SK-N-SH (cell line): ENCODE measurements at regions of chr3 and their contacts with region 1.

Region 1: GRCh38 chr3:196684548-196685407 is 27.3 kb downstream of the CEP19 start:
- DNase-seq: peak; percentile 71
- H3K4me3 ChIP-seq: no peak overlapping the region; a peak in 2 of 4 replicates
- H3K27ac ChIP-seq: no peak overlapping the region
- H3K4me1 ChIP-seq: peaks cover 0 to 6% of the 10 kb centered on the region in 2 experiments; a peak in 2 of 4 replicates
- H3K27me3 ChIP-seq: no peaks in the 10 kb centered on the region
- CTCF ChIP-seq: peak; percentile 85
- EP300 ChIP-seq: no peak
- RAD21 ChIP-seq: peak; percentile 83

Region 2: GRCh38 chr3:196251918-196252317 is 432.9 kb before region 1 on chr3:
- CTCF ChIA-PET with region 1: interaction called, 10 read pairs
- POLR2A ChIA-PET with region 1: no interaction called
- DNase-seq: no peak
- H3K4me3 ChIP-seq: no peak overlapping the region
- H3K27ac ChIP-seq: no peak overlapping the region
- H3K4me1 ChIP-seq: no peaks in the 10 kb centered on the region
- H3K27me3 ChIP-seq: no peaks in the 10 kb centered on the region
- CTCF ChIP-seq: no peak
- EP300 ChIP-seq: no peak
- RAD21 ChIP-seq: no peak

Region 3: GRCh38 chr3:196585044-196585757 is 99.6 kb before region 1 on chr3:
- CTCF ChIA-PET with region 1: interaction called, 11 read pairs
- POLR2A ChIA-PET with region 1: no interaction called
- DNase-seq: no peak
- H3K4me3 ChIP-seq: no peak overlapping the region
- H3K27ac ChIP-seq: peak overlapping the region in 1 of 2 experiments; percentile 79; a peak in 1 of 4 replicates
- H3K4me1 ChIP-seq: peaks cover 0 to 10% of the 10 kb centered on the region in 2 experiments; a peak in 1 of 4 replicates
- H3K27me3 ChIP-seq: no peaks in the 10 kb centered on the region
- CTCF ChIP-seq: no peak
- EP300 ChIP-seq: no peak
- RAD21 ChIP-seq: no peak

Region 4: DNA sequence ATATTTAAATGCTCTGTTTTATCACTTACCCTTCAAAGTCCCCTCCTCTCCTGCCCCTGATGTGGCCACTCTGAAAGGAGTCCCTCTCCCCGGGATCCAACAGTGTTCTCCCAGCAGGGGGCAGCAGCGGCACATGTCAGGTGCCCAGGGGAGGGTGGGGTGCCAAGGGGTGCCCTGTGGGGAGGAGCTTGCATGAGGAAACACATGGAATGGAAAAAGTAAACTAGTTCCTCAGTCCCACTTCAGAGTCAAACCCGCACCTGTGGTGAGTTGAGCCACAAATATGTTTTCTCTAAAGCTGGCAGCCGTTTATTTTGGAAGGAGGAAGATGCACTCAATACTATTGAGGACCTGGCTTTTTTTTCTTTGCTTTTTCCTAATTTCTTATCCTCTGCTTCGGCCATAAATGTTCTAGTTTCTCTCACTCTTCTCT is 75.4 kb before region 1 on chr3:
- CTCF ChIA-PET with region 1: interaction called, 54 read pairs
- POLR2A ChIA-PET with region 1: no interaction called
- DNase-seq: peak; percentile 92
- H3K4me3 ChIP-seq: no peak overlapping the region; a peak in 1 of 4 replicates
- H3K27ac ChIP-seq: no peak overlapping the region
- H3K4me1 ChIP-seq: peaks cover 7 to 9% of the 10 kb centered on the region in 2 experiments; a peak in 2 of 4 replicates
- H3K27me3 ChIP-seq: no peaks in the 10 kb centered on the region
- CTCF ChIP-seq: peak; percentile 85
- EP300 ChIP-seq: no peak
- RAD21 ChIP-seq: peak; percentile 90

Region 5: DNA sequence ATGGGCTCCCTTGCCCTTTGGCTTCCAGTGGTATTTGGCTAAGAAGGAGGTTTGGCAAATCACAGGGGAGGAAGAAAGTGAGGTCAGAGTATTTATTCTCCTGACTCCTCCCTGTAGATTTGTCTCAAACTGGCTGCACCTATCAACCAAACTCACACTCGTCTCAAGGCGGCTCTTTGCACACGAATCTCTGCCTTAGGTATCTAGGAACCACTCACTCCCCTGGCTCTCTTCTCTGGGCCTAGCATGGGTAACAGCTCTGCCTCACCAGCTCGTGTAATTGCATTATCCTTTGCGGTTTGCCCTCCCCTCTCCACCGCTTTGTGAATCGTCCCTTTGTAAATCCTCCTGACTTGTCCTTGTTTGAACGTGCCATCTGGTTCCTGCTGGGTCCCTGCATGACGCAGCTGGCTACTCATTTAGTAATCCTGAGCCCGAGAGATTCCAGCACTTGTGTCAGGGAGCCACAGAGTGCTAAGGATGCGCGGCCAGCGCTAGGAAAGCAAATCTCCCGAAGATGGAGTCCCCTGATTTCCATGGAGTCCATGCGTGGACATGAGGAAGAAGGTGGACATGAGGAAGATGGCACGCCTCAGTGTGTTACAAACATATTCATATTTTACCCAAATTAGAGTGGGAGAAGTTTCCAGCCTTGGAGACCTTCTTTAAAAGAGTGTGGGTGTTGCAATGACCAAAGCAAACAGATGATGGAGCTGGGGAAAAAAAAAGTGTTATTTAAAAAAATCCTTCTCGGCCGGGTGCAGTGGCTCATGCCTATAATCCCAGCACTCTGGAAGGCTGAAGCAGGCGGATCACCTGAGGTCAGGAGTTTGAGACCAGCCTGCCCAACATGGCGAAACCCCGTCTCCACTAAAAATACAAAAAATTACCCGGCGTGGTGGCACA is 18.6 kb before region 1 on chr3:
- CTCF ChIA-PET with region 1: interaction called, 15 read pairs
- POLR2A ChIA-PET with region 1: no interaction called
- DNase-seq: no peak
- H3K4me3 ChIP-seq: no peak overlapping the region
- H3K27ac ChIP-seq: peak overlapping the region in 1 of 2 experiments; percentile 23; a peak in 1 of 4 replicates
- H3K4me1 ChIP-seq: peaks cover 5 to 8% of the 10 kb centered on the region in 2 experiments; a peak in 2 of 4 replicates
- H3K27me3 ChIP-seq: no peaks in the 10 kb centered on the region; the same call in 1 of the 2 replicates
- CTCF ChIP-seq: no peak
- EP300 ChIP-seq: no peak
- RAD21 ChIP-seq: no peak

Region 6: DNA sequence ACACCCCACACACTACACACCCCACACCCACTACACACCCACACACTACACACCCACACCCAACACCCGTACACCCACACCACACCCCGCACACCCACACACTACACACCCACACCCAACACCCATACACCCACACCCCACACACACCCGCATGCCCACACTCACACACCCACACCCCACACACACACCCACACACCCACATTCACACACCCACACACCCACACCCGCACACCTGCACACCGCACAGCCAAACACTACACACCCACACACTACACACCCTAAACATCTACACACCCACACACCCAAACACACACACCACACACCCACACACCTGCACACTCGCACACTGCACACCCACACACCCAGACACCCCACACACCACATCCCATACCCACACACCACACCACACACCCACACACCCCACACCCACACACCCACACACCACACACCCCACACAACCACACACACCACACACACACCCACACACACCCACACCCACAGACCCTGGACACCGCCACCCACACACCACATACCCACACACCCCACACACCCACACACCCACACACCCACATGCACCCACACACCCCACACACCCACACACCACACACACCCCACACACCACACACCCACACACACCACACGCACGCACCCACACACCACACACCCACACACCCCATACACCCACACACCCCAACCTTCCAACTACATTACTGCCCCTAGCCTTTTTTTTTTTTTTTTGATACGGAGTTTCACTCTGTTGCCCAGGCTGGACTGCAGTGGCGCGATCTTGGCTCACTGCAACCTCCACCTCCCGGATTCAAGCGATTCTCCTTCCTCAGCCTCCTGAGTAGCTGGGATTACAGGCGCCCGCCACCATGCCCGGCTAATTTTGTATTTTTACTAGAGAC is 10.4 kb after region 1 on chr3:
- CTCF ChIA-PET with region 1: interaction called, 15 read pairs
- POLR2A ChIA-PET with region 1: no interaction called
- DNase-seq: no peak
- H3K4me3 ChIP-seq: no peak overlapping the region
- H3K27ac ChIP-seq: no peak overlapping the region
- H3K4me1 ChIP-seq: no peaks in the 10 kb centered on the region
- H3K27me3 ChIP-seq: no peaks in the 10 kb centered on the region
- CTCF ChIP-seq: no peak
- EP300 ChIP-seq: no peak
- RAD21 ChIP-seq: no peak

Region 7: DNA sequence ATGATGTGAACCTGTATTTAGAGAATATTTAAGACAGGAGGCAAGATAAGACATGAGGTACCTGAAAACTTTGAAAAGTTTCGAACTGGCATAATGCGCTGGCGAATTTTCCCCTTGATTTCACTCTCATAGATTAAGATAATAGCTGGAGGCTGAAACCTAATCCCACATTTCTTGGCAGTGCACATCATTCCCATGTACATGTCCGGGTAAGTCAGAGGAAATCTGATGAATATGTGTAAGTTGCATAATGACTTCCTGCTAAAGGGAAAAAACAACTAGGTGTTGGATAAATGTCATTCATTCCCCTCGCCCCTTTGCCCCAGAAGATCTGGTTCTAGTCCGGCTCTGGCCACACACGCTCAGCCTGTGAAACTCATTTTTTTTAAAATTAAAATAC is 23.7 kb after region 1 on chr3:
- CTCF ChIA-PET with region 1: interaction called, 11 read pairs
- POLR2A ChIA-PET with region 1: no interaction called
- DNase-seq: no peak
- H3K4me3 ChIP-seq: no peak overlapping the region
- H3K27ac ChIP-seq: no peak overlapping the region
- H3K4me1 ChIP-seq: peaks cover 0 to 3% of the 10 kb centered on the region in 2 experiments; a peak in 1 of 4 replicates
- H3K27me3 ChIP-seq: no peaks in the 10 kb centered on the region
- CTCF ChIP-seq: no peak
- EP300 ChIP-seq: no peak
- RAD21 ChIP-seq: no peak

Region 8: DNA sequence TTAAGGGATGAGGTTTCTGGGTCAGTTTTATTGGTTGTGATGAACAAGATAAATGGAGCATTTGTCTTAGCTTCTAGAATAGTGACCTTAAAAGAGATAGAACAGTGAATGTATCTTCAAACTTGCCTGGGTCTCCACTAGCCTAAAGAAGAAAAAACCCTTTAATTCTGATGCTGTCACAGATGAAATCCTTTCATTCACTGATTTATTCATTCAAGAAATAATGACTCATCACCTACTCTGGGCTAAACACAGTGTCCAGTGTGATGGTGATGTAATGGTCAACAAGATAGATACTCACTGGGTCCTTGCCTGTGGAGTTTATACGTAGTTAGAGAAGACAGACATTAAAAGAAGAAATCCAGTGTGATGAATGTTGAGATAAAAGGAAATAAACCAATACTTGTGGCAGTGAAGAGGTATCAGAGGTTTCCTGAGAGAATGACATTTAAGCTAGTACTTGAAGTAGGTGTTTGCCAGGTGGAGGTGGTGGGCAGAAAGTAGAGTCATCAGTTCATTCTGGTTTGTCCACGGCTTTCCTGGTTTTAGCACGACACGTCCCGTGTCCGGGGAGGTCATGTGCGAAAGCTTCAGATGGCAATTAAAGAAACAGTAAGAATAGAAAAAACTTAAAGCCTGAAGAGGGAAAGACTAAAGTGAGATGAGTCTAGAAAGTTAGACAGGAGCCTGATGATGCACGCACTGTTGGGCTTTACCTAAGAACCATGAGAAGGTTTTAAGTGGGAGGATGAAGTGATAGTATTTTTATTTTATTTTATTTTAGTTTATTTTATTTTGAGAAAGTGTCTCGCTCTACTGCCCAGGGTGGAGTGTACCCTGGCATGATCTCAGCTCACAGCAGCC is 73.3 kb after region 1 on chr3:
- CTCF ChIA-PET with region 1: no interaction called
- POLR2A ChIA-PET with region 1: no interaction called
- DNase-seq: no peak
- H3K4me3 ChIP-seq: no peak overlapping the region
- H3K27ac ChIP-seq: peak overlapping the region in 1 of 2 experiments; percentile 58; a peak in 1 of 4 replicates
- H3K4me1 ChIP-seq: peaks cover 0 to 3% of the 10 kb centered on the region in 2 experiments; a peak in 1 of 4 replicates
- H3K27me3 ChIP-seq: no peaks in the 10 kb centered on the region
- CTCF ChIP-seq: no peak
- EP300 ChIP-seq: no peak
- RAD21 ChIP-seq: no peak